AG04450 (cell line): ENCODE measurements at regions of chr3 and their contacts with region 1.

Region 1: GRCh38 chr3:181700168-181701087 is 11.3 kb upstream of the SOX2 start:
- DNase-seq: peak; percentile 26
- H3K4me3 ChIP-seq: no peak overlapping the region
- H3K27ac ChIP-seq: no peak overlapping the region
- H3K27me3 ChIP-seq: peaks cover 56% of the 10 kb centered on the region
- CTCF ChIP-seq: peak; percentile 93

Region 2: GRCh38 chr3:181210275-181210674 is 490.2 kb before region 1 on chr3:
- CTCF ChIA-PET with region 1: interaction called, 51 read pairs
- POLR2A ChIA-PET with region 1: no interaction called
- DNase-seq: no peak
- H3K4me3 ChIP-seq: no peak overlapping the region
- H3K27ac ChIP-seq: no peak overlapping the region
- H3K27me3 ChIP-seq: no peaks in the 10 kb centered on the region
- CTCF ChIP-seq: peak; percentile 39

Region 3: GRCh38 chr3:181326637-181327223 is 373.7 kb before region 1 on chr3:
- CTCF ChIA-PET with region 1: interaction called, 47 read pairs
- POLR2A ChIA-PET with region 1: no interaction called
- DNase-seq: no peak
- H3K4me3 ChIP-seq: no peak overlapping the region
- H3K27ac ChIP-seq: no peak overlapping the region
- H3K27me3 ChIP-seq: no peaks in the 10 kb centered on the region
- CTCF ChIP-seq: peak; percentile 69

Region 4: GRCh38 chr3:181727341-181728032 is 27.1 kb after region 1 on chr3:
- CTCF ChIA-PET with region 1: interaction called, 15 read pairs
- POLR2A ChIA-PET with region 1: no interaction called
- DNase-seq: no peak
- H3K4me3 ChIP-seq: peak overlapping the region; percentile 38
- H3K27ac ChIP-seq: no peak overlapping the region
- H3K27me3 ChIP-seq: peaks cover 63% of the 10 kb centered on the region
- CTCF ChIP-seq: no peak